Right ventricle myocardium inferior (tissue), 1 donor: ENCODE measurements at regions of chr3 and their contacts with region 1.

Region 1: GRCh38 chr3:101229681-101230080 is 90.7 kb downstream of the IMPG2 start:
- DNase-seq: no peak
- ATAC-seq: peak; percentile 49

Region 2: GRCh38 chr3:101155825-101156224 is 73.9 kb before region 1 on chr3:
- intact Hi-C with region 1: no loop called
- DNase-seq: no peak
- ATAC-seq: peak; percentile 94

Region 3: DNA sequence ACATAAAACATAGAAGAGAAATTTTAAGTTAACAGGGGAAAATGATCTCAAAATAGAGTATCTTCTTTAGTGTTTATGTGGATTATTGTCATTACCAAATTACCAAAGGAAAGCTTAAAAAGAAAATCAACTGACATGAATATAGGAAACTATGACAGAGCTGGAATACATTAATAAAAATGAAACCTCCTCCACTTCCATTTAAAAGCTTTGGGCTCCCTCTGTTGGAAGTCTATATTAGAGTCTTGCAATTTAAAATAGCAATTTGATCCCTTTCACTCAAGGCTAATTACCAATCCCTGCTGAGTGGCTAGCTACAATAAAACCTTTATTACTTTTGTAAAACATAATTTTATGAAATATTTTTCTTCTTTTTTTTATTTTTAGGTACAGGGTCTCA is 152.1 kb after region 1 on chr3:
- intact Hi-C with region 1: loop called (anchors 1 kb)
- DNase-seq: no peak
- ATAC-seq: no peak